ENCODE measurements at regions of chr10 and their contacts with region 1.

Region 1: DNA sequence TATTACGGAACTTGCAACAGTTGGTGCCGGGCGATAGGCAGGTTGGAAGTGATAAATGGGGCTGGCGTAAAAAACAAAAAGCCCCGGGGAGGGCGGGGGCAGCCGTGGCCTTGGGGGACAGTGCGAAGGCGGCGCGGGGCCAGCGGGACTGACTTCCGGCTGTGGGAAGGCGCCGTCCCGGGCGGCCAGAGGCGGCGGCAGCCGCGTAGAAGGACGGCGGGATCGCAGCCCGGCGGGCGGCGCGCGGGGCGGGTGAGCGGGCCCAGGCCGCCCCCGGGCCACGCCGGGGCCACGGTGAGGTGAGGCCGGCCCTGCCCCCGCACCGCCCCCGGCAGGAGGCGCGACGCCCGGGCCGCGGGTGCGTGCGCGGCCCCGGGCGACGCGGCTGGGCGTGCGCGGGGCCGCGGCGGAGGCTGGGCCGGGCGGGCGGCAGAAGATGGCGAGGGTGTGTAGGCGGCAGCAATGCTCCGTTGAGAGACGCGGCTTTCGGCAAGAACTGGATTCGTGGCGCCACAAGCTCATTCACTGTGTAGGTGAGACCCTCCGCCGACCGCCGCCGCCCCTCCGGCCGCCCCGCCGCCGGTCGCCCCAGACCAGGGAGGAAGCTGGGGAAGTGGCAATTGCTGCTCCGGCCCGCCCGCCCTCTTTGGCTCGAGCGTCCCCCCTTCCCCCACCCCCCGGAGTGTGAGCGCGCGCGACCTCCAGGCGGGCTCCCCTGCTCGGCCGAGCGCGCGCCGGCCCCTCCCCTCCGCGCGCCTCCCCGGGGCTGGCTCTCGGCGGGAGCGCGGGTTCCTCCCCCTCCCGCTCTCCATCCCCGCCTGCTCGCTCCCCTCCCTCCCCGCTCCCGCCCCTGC is at the start of gene LCOR:
- DNase-seq: peak; percentile 77
- H3K4me3 Mint-ChIP-seq: peak within 1 kb of the TSS; percentile 88
- H3K27ac Mint-ChIP-seq: peak within 1 kb of the TSS; percentile 94
- H3K4me1 Mint-ChIP-seq: peaks cover 40% of the 10 kb centered on the region
- H3K27me3 Mint-ChIP-seq: no peaks in the 10 kb centered on the region
- total RNA-seq, gene LCOR: 23.6 and 27.3 TPM in 2 replicates

Region 2: GRCh38 chr10:96395931-96396877 is 435.9 kb before region 1 on chr10:
- intact Hi-C with region 1: loop called (anchors 5 kb)
- DNase-seq: peak; percentile 37
- H3K4me3 Mint-ChIP-seq: no peak overlapping the region
- H3K27ac Mint-ChIP-seq: no peak overlapping the region
- H3K4me1 Mint-ChIP-seq: peaks cover 6% of the 10 kb centered on the region
- H3K27me3 Mint-ChIP-seq: peaks cover 27% of the 10 kb centered on the region

Region 3: DNA sequence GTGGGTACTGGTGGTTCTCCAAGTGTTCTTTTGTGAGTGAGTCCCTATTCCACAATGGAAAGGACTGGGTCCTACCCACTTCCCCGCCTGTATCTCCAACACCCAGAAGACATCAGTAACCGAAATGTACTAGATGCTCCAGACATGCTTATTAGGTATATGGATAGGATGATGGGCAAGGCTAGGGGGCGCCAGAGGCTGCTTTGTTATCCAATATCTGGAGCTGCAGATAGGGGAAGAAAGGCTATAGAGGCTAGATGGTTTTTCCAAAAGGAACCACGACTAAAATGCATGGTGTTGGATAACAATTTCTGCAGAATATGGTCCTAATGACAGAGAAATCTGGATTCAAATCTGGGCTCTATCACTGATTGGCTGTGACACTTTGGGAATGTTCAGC is 189.1 kb before region 1 on chr10:
- intact Hi-C with region 1: loop called (anchors 1 kb)
- DNase-seq: peak; percentile 46
- H3K4me3 Mint-ChIP-seq: no peak overlapping the region
- H3K27ac Mint-ChIP-seq: no peak overlapping the region
- H3K4me1 Mint-ChIP-seq: peaks cover 19% of the 10 kb centered on the region
- H3K27me3 Mint-ChIP-seq: peaks cover 10% of the 10 kb centered on the region

Region 4: GRCh38 chr10:96765406-96766240 is 66.5 kb before region 1 on chr10:
- intact Hi-C with region 1: loop called (anchors 1 kb)
- DNase-seq: peak; percentile 53
- H3K4me3 Mint-ChIP-seq: no peak overlapping the region
- H3K27ac Mint-ChIP-seq: no peak overlapping the region
- H3K4me1 Mint-ChIP-seq: no peaks in the 10 kb centered on the region
- H3K27me3 Mint-ChIP-seq: peaks cover 13% of the 10 kb centered on the region

Region 5: GRCh38 chr10:96814264-96814663 is 17.8 kb before region 1 on chr10:
- intact Hi-C with region 1: no loop called
- DNase-seq: no peak
- H3K4me3 Mint-ChIP-seq: no peak overlapping the region
- H3K27ac Mint-ChIP-seq: no peak overlapping the region
- H3K4me1 Mint-ChIP-seq: no peaks in the 10 kb centered on the region
- H3K27me3 Mint-ChIP-seq: peaks cover 16% of the 10 kb centered on the region

Region 6: GRCh38 chr10:96863922-96864543 is 31.9 kb after region 1 on chr10:
- intact Hi-C with region 1: loop called (anchors 2 kb)
- DNase-seq: no peak
- H3K4me3 Mint-ChIP-seq: no peak overlapping the region
- H3K27ac Mint-ChIP-seq: peak overlapping the region; percentile 58
- H3K4me1 Mint-ChIP-seq: peaks cover 21% of the 10 kb centered on the region
- H3K27me3 Mint-ChIP-seq: no peaks in the 10 kb centered on the region

Region 7: DNA sequence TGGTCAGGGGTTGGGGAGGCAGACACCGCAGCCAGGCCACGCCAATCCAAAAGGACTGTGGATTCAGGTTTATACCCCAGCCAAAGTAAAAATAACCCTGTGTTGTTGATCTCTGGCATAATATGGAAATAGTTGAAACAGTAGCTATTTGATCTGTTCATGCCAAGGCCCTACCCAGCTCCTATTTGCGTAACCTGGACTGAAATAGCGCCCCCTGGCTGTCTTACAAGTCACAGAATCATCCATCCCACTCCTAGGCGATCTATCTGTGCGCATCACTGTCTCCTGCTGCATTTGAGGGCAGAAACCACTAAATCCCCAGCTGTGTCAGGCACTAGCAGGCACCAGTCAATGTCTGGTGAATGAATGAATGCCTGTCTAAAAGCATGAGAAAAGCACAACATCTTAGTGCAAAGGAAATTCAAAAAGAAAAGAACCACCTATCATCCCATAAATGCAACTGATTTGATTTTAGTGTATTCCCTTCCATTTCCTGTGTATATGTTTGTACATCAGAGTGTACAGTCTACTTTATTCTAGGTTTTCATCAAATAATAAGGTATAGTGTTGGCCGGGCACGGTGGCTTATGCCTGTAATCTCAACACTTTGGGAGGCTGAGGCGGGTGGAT is 193.6 kb after region 1 on chr10:
- intact Hi-C with region 1: loop called (anchors 5 kb)
- DNase-seq: peak; percentile 48
- H3K4me3 Mint-ChIP-seq: no peak overlapping the region
- H3K27ac Mint-ChIP-seq: no peak overlapping the region
- H3K4me1 Mint-ChIP-seq: peaks cover 6% of the 10 kb centered on the region
- H3K27me3 Mint-ChIP-seq: peaks cover 10% of the 10 kb centered on the region

Measured in activated T-helper 2 cell treated with anti-CD3 and anti-CD28 coated beads, Interferon-gamma antibody, Interleukin-2, Interleukin-4, amounts not matched to agents 10 μg/mL and 5 μg/mL and 100 μg/mL, durations not matched to agents 14 hours and 24 hours and 36 hours (primary cell).